ENCODE measurements at regions of chr5 and their contacts with region 1.

Region 1: GRCh38 chr5:159504857-159505304 is 174.6 kb upstream of the IL12B start:
- DNase-seq: no peak
- CTCF ChIP-seq: no peak

Region 2: DNA sequence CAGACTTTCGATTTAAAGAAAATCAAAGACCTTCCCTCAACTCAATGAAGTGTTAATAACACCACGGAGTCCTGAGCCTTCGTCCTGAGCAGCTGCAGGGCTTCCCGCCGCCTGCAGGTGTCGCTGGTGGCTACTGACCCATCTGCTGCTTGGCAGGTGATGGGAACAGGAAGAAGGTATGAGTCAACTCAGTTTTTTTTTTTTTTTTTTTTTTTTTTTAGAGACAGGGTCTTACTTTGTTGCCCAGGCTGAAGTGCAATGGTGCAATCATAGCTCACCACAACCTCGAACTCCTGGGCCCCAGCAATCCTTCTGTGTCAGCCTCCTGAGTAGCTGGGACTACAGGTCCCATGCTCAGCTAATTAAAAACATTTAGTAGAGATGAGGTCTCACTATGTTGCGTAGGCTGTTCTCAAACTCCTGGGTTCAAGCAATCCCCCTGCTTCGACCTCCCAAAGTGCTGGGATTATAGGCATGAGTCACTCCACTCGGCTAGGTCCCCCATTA is 11.1 kb after region 1 on chr5:
- CTCF ChIA-PET with region 1: interaction called, 47 read pairs
- POLR2A ChIA-PET with region 1: no interaction called
- DNase-seq: peak; percentile 77
- CTCF ChIP-seq: peak; percentile 93

Measured in GM10248 (cell line).